IMR-90 (cell line): ENCODE measurements at regions of chr4 and their contacts with region 1.

Region 1: GRCh38 chr4:89056953-89057398 is at the start of gene FAM13A:
- DNase-seq: peak; percentile 97
- ATAC-seq: peak; percentile 83
- H3K4me3 ChIP-seq: peak within 1 kb of the TSS; percentile 52
- H3K27ac ChIP-seq: peak within 1 kb of the TSS; percentile 16
- H3K4me1 ChIP-seq: peaks cover 2% of the 10 kb centered on the region; the same call in 1 of the 2 replicates
- H3K27me3 ChIP-seq: no peaks in the 10 kb centered on the region
- CTCF ChIP-seq: no peak
- POLR2A ChIP-seq: no peak
- RAD21 ChIP-seq: no peak
- total RNA-seq, gene FAM13A: 22.0 and 25.3 TPM in 2 replicates

Region 2: GRCh38 chr4:88043001-88043400 is 1014.0 kb before region 1 on chr4:
- CTCF ChIA-PET with region 1: no interaction called
- POLR2A ChIA-PET with region 1: interaction called, 10 read pairs
- dilution Hi-C with region 1: no loop called
- in situ Hi-C with region 1: no loop called
- intact Hi-C with region 1: no loop called
- DNase-seq: no peak
- ATAC-seq: no peak
- H3K4me3 ChIP-seq: no peak overlapping the region
- H3K27ac ChIP-seq: no peak overlapping the region
- H3K4me1 ChIP-seq: no peaks in the 10 kb centered on the region
- H3K27me3 ChIP-seq: no peaks in the 10 kb centered on the region
- CTCF ChIP-seq: no peak
- POLR2A ChIP-seq: no peak
- RAD21 ChIP-seq: no peak

Region 3: DNA sequence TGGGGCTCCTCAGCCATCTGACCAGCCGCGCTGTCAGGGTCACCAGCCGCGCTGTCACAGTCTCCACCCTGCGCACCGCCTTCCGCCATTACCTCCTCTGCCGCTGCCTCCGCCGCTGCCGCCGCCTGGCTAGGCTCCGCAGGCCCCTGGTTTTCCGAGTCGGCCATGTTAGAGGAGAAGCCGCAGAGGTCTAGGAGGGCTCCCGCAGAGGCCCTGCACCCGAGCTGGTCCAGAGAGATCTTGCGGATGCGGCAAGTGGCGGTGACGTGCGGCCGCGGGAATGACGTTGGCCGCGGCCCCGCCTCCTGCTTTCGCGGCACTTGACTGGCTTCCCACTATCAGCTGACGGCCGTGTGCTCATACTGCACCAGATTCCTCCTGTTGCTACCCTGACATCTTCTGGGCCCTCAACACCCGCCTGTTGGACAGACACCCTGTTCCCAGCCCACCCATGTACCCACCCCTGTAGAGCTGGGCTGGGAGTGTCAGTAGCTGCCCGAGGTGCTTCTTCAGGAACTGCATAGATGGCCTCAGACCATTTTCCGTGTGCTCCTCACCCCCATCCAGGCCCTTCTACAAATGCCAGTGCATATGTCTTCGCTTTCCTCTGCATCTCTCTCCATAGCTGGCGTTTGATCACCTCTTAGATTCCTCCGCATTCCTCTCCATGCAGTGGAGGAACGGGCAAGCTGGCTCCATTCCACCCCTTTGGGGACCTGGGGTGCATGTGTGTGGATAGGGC is 359.2 kb before region 1 on chr4 and contains the start of gene NAP1L5:
- CTCF ChIA-PET with region 1: no interaction called
- POLR2A ChIA-PET with region 1: no interaction called
- dilution Hi-C with region 1: no loop called
- in situ Hi-C with region 1: no loop called
- intact Hi-C with region 1: no loop called
- DNase-seq: peak; percentile 85
- ATAC-seq: peak; percentile 85
- H3K4me3 ChIP-seq: peak within 1 kb of the TSS; percentile 51
- H3K27ac ChIP-seq: peak within 1 kb of the TSS; percentile 26
- H3K4me1 ChIP-seq: no peaks in the 10 kb centered on the region; the same call in 1 of the 2 replicates
- H3K27me3 ChIP-seq: no peaks in the 10 kb centered on the region
- CTCF ChIP-seq: no peak
- POLR2A ChIP-seq: peak; percentile 42; the same call in 1 of the 2 replicates
- RAD21 ChIP-seq: no peak
- total RNA-seq, gene NAP1L5: 3.9 and 5.6 TPM in 2 replicates

Region 4: DNA sequence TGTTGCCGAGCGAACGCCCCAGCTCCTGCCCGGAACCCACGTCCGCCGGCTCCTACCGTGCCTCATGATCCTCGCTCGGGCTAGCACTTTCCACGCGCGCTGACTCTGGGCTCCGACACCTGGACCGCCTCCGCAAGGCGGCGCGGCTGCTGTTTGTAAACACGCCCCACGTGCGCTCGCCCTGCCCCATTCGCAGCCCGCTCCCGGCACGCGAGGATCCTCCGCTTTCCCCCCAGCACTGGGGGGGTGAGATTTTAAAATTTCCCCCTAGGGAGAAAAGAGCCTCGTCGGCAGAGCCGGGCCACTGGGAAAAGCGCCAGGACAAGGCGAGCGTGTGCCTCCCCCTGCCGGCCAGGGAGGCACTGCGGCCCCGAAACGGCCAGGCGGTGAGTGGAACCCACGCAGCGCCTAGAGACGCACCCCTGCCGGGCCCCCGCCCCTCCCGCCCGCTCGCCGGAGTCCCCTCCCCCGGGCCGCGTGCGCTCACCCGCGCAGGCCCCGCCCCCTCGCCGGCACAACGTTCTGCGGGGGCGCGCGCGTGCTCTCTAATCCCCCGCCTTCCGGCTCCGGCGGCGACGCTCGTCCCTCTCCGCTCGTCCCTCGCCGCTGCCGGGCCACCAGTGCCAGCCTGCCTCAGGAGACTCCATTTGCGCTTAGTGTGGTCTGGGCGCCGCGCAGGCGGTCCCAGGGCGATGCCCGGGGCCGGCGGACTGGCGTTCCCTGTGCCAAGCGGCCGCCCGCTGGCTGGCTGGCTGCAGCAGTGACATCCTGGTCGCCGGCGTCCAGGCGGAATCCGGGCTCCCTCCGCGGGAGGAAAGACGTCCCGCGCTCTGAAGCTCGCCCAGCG is 54.2 kb after region 1 on chr4 and contains the start of gene TIGD2:
- CTCF ChIA-PET with region 1: no interaction called
- POLR2A ChIA-PET with region 1: no interaction called
- dilution Hi-C with region 1: no loop called
- in situ Hi-C with region 1: no loop called
- intact Hi-C with region 1: loop called (anchors 2 kb)
- DNase-seq: peak; percentile 81
- ATAC-seq: peak; percentile 96
- H3K4me3 ChIP-seq: peak within 1 kb of the TSS; percentile 94
- H3K27ac ChIP-seq: peak within 1 kb of the TSS; percentile 89
- H3K4me1 ChIP-seq: 0 out of 2 replicates have a peak, but pooled peaks cover 2% of the 10 kb centered on the region
- H3K27me3 ChIP-seq: peaks cover 24% of the 10 kb centered on the region
- CTCF ChIP-seq: peak; percentile 69
- POLR2A ChIP-seq: no peak
- RAD21 ChIP-seq: peak; percentile 51
- total RNA-seq, gene TIGD2: 12.4 and 16.4 TPM in 2 replicates

Region 5: DNA sequence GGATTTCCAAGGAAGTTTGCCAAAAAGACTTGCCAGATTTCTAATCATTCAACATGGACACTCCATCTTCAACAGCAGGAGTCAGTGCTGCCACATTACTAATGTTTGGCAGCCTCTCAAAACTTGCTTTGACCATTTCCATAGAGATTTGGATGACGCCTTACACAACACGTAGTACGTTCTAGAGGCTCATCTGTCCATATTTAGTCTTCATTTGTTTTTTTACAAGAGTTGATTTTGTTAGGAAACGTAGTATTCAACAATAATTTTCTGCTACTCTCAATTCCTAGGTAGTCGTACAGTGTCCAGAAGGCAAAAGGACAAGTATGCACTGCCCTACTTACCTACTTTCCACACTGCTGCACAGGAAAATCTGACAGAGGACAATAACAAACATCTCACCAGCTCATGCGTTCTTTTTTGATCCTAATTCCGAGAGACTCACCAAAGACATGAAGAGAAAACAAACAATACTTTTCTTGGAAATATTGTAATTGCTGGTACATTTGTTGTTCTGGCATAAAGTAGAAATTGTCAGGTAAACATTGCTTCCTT is 662.6 kb after region 1 on chr4:
- CTCF ChIA-PET with region 1: no interaction called
- POLR2A ChIA-PET with region 1: interaction called, 13 read pairs
- dilution Hi-C with region 1: no loop called
- in situ Hi-C with region 1: no loop called
- intact Hi-C with region 1: no loop called
- DNase-seq: no peak
- ATAC-seq: no peak
- H3K4me3 ChIP-seq: no peak overlapping the region
- H3K27ac ChIP-seq: no peak overlapping the region
- H3K4me1 ChIP-seq: peaks cover 2% of the 10 kb centered on the region; the same call in 1 of the 2 replicates
- H3K27me3 ChIP-seq: no peaks in the 10 kb centered on the region
- CTCF ChIP-seq: no peak
- POLR2A ChIP-seq: no peak
- RAD21 ChIP-seq: no peak